MCF 10A (cell line): ENCODE measurements at regions of chr3 and their contacts with region 1.

Region 1: DNA sequence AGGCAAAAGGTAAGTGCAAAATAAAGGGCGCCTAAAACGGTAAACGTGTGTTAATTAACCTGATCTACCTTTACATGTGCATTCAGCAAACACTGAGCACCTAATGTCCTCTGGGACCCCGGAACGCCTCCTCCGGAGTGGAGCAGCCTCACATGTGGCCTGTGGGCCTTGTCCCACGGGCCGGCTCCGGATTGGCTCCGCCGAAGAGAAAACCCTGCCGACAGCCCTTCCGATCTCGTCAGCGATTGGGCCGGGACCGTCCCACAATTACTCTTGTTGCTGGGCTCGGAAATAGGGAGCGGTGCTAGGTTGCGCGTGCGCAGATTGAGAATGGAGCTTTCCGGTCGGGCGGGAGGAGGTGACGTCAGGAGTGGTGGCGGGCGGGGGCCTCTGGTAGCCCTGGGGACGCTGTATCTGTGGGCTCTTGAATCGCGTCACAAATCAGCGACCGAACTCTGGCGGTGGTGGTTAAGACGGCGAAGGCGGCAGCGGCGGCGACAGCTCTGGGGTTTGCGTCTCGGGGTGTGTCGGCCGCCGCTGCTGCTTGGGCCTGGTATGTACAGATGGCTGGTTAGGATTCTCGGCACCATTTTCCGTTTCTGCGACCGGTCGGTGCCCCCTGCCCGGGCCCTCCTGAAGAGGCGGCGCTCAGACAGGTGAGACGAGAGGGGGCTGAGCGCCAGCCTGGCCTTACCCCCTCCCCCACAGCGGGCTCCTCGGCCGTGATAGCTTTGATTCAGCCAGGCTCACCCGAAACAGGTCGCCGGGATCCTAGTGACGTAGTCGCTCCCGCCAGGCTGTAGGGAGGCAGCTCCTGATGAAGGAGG is at the start of gene SENP2:
- DNase-seq: peak; percentile 99
- H3K4me3 Mint-ChIP-seq: peak within 1 kb of the TSS; percentile 96
- H3K27ac Mint-ChIP-seq: peak within 1 kb of the TSS; percentile 98
- H3K4me1 Mint-ChIP-seq: peaks cover 10% of the 10 kb centered on the region
- H3K27me3 Mint-ChIP-seq: no peaks in the 10 kb centered on the region
- CTCF ChIP-seq: no peak
- total RNA-seq, gene SENP2: 27.0 and 38.5 TPM in 2 replicates

Region 2: GRCh38 chr3:185572183-185572582 is 13.9 kb before region 1 on chr3:
- CTCF ChIA-PET with region 1: interaction called, 18 read pairs
- POLR2A ChIA-PET with region 1: interaction called, 9 read pairs
- intact Hi-C with region 1: no loop called
- DNase-seq: no peak
- H3K4me3 Mint-ChIP-seq: no peak overlapping the region
- H3K27ac Mint-ChIP-seq: no peak overlapping the region
- H3K4me1 Mint-ChIP-seq: peaks cover 7% of the 10 kb centered on the region
- H3K27me3 Mint-ChIP-seq: no peaks in the 10 kb centered on the region
- CTCF ChIP-seq: no peak

Region 3: DNA sequence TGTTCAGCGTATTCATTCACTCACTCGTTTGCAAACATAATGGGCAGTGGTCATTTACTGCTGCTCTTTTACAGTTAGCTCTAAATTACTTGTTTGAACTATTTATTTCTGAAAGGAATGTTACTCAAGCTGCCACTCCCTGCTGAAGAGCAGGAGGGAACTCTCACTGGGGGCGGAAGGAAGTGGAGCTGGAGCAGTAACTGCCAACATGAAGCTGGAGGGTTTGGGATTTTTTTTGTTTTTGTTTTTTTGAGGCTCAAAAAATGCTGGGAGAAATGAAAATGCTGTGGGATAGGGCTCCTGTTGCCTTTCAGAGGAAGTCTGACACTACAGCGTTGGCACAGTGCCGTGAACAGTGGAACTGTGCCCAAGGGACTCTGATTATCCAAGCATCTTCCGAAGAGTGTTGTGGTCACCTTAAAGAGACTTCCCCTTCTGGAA is 44.1 kb after region 1 on chr3:
- CTCF ChIA-PET with region 1: interaction called, 4 read pairs
- POLR2A ChIA-PET with region 1: interaction called, 10 read pairs
- intact Hi-C with region 1: no loop called
- DNase-seq: peak; percentile 72
- H3K4me3 Mint-ChIP-seq: peak overlapping the region; percentile 57
- H3K27ac Mint-ChIP-seq: peak overlapping the region; percentile 95
- H3K4me1 Mint-ChIP-seq: peaks cover 8% of the 10 kb centered on the region
- H3K27me3 Mint-ChIP-seq: no peaks in the 10 kb centered on the region
- CTCF ChIP-seq: no peak